ENCODE measurements at regions of chr2 and their contacts with region 1.

Region 1: DNA sequence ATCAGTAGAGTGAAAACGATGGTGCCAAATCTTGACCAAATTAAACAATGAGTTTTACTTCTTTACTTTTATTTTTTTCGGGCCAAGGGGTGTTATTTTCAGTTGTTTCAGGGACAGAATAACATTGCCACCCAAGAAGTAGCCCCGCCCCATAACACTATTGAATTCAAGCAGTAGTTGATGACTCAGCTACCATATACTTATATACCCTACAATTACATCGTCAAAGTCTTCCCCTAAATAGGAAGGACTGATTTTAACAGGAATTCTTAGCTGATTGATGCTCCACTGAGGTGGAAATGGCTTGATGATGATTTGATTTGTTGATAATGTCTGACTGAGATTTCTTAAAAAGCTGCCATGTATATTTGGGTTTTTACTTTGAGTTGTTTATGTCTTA is 24.7 kb downstream of the LYPD6B start:
- DNase-seq: no peak
- ATAC-seq: no peak
- H3K4me3 Mint-ChIP-seq: no peak overlapping the region
- H3K27ac Mint-ChIP-seq: no peak overlapping the region
- H3K4me1 Mint-ChIP-seq: peaks cover 12% of the 10 kb centered on the region
- H3K27me3 Mint-ChIP-seq: no peaks in the 10 kb centered on the region
- CTCF ChIP-seq: no peak

Region 2: GRCh38 chr2:149098701-149099100 is 35.5 kb after region 1 on chr2:
- CTCF ChIA-PET with region 1: no interaction called
- POLR2A ChIA-PET with region 1: no interaction called
- DNase-seq: no peak
- ATAC-seq: no peak
- H3K4me3 Mint-ChIP-seq: no peak overlapping the region
- H3K27ac Mint-ChIP-seq: no peak overlapping the region
- H3K4me1 Mint-ChIP-seq: peaks cover 2% of the 10 kb centered on the region; the same call in 1 of the 2 replicates
- H3K27me3 Mint-ChIP-seq: peaks cover 6% of the 10 kb centered on the region; the same call in 1 of the 2 replicates
- CTCF ChIP-seq: no peak

Region 3: GRCh38 chr2:149148194-149149006 is 85.2 kb after region 1 on chr2:
- CTCF ChIA-PET with region 1: no interaction called
- POLR2A ChIA-PET with region 1: interaction called, 12 read pairs
- DNase-seq: no peak
- ATAC-seq: no peak
- H3K4me3 Mint-ChIP-seq: no peak overlapping the region
- H3K27ac Mint-ChIP-seq: no peak overlapping the region
- H3K4me1 Mint-ChIP-seq: peaks cover 16% of the 10 kb centered on the region
- H3K27me3 Mint-ChIP-seq: no peaks in the 10 kb centered on the region; the same call in 1 of the 2 replicates
- CTCF ChIP-seq: no peak